HCT116 (cell line): ENCODE measurements at regions of chr20 and their contacts with region 1.

Region 1: DNA sequence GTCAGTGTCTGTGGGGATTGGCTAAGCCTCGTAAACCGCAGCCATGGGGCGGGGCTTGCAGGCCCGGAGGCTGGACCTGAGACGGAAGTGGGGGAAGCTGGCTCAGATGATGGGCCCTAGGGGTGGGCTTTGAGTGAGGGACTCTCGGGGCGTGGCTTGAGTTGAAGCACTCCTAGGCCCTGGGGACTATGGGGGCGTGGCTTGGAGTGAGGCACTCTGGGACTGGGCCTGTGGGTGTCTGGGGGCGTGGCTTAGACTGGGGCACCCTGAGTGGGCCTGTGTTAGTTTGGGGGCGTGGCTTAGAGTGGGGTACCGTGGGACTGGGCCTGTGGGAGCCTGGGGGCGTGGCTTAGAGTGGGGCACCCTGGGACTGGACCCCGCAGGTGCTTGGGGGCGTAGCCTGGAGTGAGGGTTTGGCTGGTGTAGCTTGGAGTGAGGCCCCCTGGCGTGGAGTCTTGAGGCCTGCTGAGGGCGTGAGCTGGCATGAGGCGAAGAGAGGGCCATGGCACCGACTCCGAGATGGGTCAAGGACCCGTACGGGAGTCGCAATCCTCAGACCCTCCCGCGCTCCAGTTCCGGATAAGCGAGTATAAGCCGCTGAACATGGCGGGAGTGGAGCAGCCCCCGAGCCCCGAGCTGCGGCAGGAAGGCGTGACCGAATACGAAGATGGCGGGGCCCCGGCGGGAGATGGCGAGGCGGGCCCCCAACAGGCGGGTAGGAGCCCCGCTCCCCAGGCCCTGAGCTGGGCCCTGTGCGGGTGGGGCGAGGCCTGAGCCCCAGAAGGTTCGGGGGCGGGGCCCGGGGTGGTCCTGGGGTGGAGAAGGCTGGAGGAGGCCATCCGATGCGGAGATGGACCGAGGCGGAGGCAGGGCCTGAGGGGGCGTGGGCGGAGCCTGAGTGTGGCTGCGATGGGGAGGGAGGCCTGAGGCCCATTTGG is 6.8 kb downstream of the L3MBTL1 start:
- DNase-seq: peak; percentile 96
- ATAC-seq: peak; percentile 89
- H3K4me3 ChIP-seq: peak overlapping the region; percentile 57 to 63
- H3K27ac ChIP-seq: peak overlapping the region; percentile 69
- H3K4me1 ChIP-seq: peaks cover 3 to 8% of the 10 kb centered on the region in 2 experiments; a peak in 2 of 4 replicates
- H3K27me3 ChIP-seq: no peaks in the 10 kb centered on the region
- CTCF ChIP-seq: peak in 2 of 3 experiments; percentile 19 to 28; a peak in 2 of 6 replicates
- POLR2A ChIP-seq: no peak
- RAD21 ChIP-seq: no peak

Region 2: DNA sequence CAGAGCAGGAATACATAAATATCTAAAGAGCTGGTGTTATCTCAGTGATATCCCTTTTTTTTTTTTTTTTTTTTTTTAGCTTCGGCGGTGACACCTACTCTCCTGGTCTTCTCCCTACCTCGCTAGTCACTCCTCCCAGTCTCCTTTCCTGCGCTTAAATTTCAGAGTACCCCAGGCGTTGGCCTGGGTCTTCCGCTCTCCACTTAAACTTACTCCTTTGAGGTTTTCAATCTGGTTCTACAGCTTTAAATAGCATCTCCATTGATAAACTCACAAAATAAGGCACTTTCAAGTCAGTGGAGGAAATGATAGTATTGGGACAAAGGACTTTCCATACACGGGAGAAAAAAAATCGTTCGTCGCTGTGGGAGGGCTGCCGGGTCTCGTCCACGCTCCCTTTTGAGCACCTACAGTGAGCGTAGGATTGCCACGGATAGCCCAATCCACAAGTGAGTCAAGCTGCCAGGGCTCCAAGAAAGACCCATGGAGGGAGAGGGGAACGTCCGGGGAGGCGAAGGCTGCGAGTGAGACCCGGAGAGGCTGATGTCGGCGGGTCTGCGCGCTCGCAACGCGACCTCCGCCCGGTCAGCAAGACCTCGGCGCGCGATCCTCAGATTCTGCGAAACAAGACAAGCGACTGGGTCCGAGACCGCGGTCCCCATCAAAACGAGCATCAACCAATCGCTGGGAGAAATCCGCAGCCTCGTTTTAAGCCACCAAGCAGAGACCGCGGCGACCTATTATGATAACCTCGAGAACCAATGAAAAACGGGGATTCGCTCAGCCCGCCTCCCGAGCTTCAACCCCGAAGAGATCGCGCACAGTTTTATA is 57.3 kb before region 1 on chr20:
- CTCF ChIA-PET with region 1: no interaction called
- POLR2A ChIA-PET with region 1: interaction called, 22 read pairs
- RAD21 ChIA-PET with region 1: no interaction called
- intact Hi-C with region 1: loop called (anchors 2 kb)
- DNase-seq: peak; percentile 92
- ATAC-seq: peak; percentile 85
- H3K4me3 ChIP-seq: peak overlapping the region; percentile 82 to 83
- H3K27ac ChIP-seq: peak overlapping the region; percentile 100
- H3K4me1 ChIP-seq: peaks cover 5 to 15% of the 10 kb centered on the region in 2 experiments; a peak in 3 of 4 replicates
- H3K27me3 ChIP-seq: no peaks in the 10 kb centered on the region
- CTCF ChIP-seq: no peak
- POLR2A ChIP-seq: no peak
- RAD21 ChIP-seq: no peak

Region 3: DNA sequence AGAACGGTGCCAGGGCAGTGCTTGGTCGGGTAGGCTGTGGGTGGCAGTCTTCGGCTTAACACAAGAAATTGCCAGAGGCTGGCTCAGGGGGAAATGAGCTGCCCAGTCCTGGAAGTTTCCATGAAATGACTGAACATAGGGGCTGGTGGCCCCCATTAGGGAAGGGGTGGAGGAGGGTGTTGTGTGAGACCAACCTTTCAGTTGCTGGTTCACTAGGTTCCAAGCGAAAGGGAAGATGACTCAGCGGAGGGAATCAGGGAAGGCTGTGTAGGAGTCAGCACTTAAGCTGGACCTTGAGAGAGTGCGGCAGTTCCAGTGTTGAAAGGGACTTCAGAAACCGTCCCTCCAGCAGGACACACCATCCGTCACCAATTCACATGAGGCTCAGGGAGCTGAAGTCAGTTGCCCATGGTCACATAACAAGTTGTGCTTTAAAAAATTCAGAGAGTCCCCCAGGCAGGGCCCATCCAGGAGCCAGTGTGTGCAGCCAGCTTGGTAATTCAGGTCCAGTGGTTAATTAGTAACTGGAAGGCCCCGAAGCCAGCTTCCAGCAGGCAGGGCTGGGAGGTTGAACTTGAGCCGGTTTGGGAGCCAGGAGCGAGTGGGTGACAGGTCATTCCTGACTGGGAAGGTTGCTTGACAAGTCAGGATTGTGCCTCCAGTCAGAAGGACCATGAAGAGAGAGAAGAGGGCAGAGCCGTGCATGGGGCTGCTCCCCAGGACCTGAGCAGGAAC is 44.2 kb after region 1 on chr20 and contains the start of gene SGK2:
- CTCF ChIA-PET with region 1: no interaction called
- POLR2A ChIA-PET with region 1: no interaction called
- RAD21 ChIA-PET with region 1: no interaction called
- intact Hi-C with region 1: no loop called
- DNase-seq: no peak
- ATAC-seq: peak; percentile 60; the same call in 1 of the 2 replicates
- H3K4me3 ChIP-seq: no peak within 1 kb of the TSS
- H3K27ac ChIP-seq: peak within 1 kb of the TSS; percentile 32; the same call in 1 of the 2 replicates
- H3K4me1 ChIP-seq: peaks cover 10 to 20% of the 10 kb centered on the region in 2 experiments
- H3K27me3 ChIP-seq: no peaks in the 10 kb centered on the region
- CTCF ChIP-seq: no peak
- POLR2A ChIP-seq: no peak
- RAD21 ChIP-seq: no peak
- total RNA-seq, gene SGK2: 2.3 TPM

Region 4: DNA sequence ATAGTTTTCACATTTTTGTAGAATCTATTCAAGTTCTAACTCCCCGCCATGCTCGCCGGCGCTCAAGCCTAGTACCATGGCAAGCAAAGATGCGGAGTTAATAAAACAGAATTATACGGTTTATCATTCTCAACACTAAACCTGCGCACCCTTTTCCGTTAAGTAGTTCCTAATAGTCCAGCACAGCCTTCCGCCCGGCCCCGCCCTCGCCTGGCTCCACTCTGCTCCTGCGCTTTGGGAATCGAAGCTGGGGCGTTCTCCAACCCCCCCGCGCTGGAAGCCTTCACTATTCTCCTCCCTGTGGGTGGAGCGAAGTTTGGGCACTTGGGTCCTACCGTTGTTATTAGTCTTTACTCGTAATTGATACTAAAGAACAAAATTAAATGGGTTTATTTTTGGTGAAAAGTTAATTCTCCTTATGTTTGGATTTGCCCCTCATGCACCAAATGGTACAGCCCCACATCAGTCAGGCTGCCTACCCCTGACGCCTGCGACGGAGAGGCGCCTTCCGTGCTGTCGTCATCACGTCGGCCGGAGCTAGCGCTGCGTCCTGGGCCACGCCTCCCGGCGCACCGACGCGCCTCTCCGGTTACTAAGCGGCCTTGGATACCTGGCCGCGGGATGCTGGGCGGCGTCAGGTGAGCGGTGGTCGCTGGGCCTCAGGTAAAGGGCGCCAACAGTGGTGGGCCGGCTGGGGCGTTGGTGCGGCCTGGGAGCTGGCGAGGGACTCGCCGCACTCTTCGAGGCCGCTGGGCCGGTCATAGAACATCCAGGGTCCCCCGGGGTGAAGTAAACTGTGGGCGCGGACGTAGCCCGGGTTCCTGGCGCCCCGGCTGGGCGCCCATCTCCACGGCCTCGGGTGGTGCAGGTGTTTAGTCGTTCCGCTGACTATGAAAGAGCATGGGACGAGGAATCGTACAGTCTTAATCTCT is 76.3 kb after region 1 on chr20 and contains the start of gene IFT52:
- CTCF ChIA-PET with region 1: no interaction called
- POLR2A ChIA-PET with region 1: no interaction called
- RAD21 ChIA-PET with region 1: no interaction called
- intact Hi-C with region 1: loop called (anchors 2 kb)
- DNase-seq: peak; percentile 89
- ATAC-seq: peak; percentile 98
- H3K4me3 ChIP-seq: peak within 1 kb of the TSS; percentile 84 to 86
- H3K27ac ChIP-seq: peak within 1 kb of the TSS; percentile 56
- H3K4me1 ChIP-seq: peaks cover 9 to 16% of the 10 kb centered on the region in 2 experiments; a peak in 3 of 4 replicates
- H3K27me3 ChIP-seq: no peaks in the 10 kb centered on the region
- CTCF ChIP-seq: no peak
- POLR2A ChIP-seq: peak; percentile 61
- RAD21 ChIP-seq: no peak
- total RNA-seq, gene IFT52: 29.0 TPM